Heart right ventricle (tissue), 16 donors: ENCODE measurements at regions of chr13 and their contacts with region 1.

Region 1: GRCh38 chr13:107124129-107124718 is 556.3 kb upstream of the ARGLU1 start:
- DNase-seq: no peak
- ATAC-seq: no peak
- H3K4me3 ChIP-seq: no peak overlapping the region
- H3K27ac ChIP-seq: no peak overlapping the region
- H3K4me1 ChIP-seq: peaks cover 0 to 6% (median 0%) of the 10 kb centered on the region in 9 donors
- H3K27me3 ChIP-seq: no peaks in the 10 kb centered on the region
- CTCF ChIP-seq: peak; percentile 54 to 88 (median 66)

Region 2: DNA sequence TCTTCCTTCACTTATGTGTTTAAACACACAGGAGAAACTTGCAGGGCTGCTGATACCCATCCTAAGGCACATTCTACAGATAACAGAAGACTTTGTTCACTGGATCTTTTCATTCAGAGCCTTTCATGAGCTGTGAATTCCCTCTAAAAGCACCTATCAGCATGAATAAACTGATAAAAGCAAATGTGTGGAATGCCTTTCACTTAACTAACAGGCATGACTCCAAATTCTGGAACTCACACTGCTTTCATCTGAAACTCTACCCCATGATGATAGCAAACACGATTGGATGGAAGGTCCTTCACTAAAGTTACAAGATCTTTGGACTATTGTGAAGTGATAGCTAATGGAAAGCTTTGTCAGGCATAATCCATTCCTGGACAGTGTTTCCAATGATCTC is 1046.0 kb before region 1 on chr13:
- intact Hi-C with region 1: loop called in 4 of 10 experiments (anchors 10 kb)
- DNase-seq: no peak
- ATAC-seq: no peak
- H3K4me3 ChIP-seq: no peak overlapping the region
- H3K27ac ChIP-seq: no peak overlapping the region
- H3K4me1 ChIP-seq: no peaks in the 10 kb centered on the region
- H3K27me3 ChIP-seq: peaks cover 0 to 2% (median 0%) of the 10 kb centered on the region in 7 donors
- CTCF ChIP-seq: no peak

Region 3: DNA sequence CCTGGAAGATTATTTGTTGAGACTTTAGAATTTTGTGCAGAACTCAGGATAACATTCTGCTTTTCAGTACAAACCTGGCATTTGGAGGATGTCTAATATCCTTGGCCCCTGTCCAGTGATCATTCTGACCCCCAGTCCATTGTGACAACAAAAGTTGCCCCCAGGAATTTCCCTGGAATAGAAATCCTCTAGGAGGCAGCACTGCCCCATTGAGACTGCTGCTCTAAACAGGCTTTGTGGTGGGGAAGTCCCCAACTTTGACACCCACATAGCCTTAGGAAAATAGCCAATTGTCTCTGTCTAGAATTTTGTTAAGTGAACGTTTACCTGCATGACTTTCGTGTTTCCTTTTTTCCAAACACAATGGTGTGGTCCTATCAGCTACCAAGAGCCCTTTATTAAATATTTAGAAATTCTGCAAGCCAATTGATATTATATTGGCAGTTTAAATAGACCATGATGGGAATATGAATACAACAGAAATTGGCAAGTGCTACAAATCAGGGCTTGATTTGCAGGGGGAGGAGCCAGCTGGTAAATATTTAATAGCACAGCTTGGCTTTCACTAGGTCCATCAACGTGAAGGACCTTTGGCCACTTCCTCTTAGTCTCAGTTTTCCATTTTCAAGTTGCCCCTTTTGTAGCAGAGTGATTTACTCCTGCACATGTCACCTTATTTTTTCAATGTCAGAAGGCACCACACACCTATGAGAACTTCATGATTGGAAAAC is 1040.4 kb before region 1 on chr13:
- intact Hi-C with region 1: loop called in 4 of 10 experiments (anchors 10 kb)
- DNase-seq: peak in 1 of 2 donors; percentile 32
- ATAC-seq: peak in 4 of 8 donors; percentile 47 to 67 (median 60)
- H3K4me3 ChIP-seq: no peak overlapping the region
- H3K27ac ChIP-seq: no peak overlapping the region
- H3K4me1 ChIP-seq: no peaks in the 10 kb centered on the region
- H3K27me3 ChIP-seq: no peaks in the 10 kb centered on the region
- CTCF ChIP-seq: peak; percentile 23 to 76 (median 61)

Region 4: DNA sequence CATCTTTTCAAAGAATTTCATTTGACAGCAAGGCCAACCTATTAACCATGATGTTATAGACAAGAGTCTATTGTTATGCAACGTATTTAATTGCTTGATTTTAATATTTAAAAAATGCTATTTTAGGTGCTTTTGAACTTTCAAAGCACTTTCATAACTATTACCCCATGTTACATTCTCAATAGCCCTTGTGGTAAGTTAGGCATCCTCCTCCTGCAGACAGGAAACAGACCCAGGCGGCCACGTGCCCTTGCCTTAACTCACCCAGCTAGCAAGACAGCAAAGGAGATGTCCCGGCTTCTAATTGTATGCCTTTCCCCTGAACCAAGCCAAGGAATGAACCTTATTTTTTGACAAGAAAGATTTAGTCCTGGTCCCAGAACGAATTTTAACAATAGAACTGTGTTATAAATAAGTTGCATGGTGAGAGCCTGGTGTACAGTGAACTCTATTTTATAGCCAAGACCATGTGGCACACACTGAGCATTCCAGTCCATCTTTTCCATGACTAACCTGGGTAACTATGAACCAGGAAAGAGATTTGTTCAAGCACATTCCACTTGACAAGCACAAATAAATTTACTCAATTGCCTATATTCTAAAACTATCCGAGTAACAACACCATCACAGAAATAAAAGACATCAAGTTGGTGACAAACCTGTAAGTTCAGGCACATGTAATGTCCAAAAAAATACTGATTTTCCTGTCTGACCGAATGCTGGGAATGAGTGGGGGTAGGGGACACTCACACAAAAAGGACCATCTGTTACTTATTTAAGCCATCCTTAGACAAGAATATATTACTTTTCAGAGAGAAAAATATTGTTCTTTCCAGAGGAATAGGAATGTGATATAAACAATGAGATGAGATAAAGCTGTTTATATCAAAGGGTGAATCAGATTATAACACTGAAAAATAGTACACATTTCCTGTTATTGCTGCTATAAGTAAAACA is 751.7 kb before region 1 on chr13:
- intact Hi-C with region 1: no loop called
- DNase-seq: no peak
- ATAC-seq: no peak
- H3K4me3 ChIP-seq: no peak overlapping the region
- H3K27ac ChIP-seq: no peak overlapping the region
- H3K4me1 ChIP-seq: peaks cover 0 to 18% (median 0%) of the 10 kb centered on the region in 9 donors
- H3K27me3 ChIP-seq: no peaks in the 10 kb centered on the region
- CTCF ChIP-seq: no peak

Region 5: GRCh38 chr13:106927421-106927820 is 196.8 kb before region 1 on chr13:
- intact Hi-C with region 1: loop called in 5 of 10 experiments (anchors 5 to 10 kb)
- DNase-seq: no peak
- ATAC-seq: no peak
- H3K4me3 ChIP-seq: no peak overlapping the region
- H3K27ac ChIP-seq: no peak overlapping the region
- H3K4me1 ChIP-seq: no peaks in the 10 kb centered on the region
- H3K27me3 ChIP-seq: peaks cover 0 to 5% (median 0%) of the 10 kb centered on the region in 7 donors
- CTCF ChIP-seq: no peak

Region 6: DNA sequence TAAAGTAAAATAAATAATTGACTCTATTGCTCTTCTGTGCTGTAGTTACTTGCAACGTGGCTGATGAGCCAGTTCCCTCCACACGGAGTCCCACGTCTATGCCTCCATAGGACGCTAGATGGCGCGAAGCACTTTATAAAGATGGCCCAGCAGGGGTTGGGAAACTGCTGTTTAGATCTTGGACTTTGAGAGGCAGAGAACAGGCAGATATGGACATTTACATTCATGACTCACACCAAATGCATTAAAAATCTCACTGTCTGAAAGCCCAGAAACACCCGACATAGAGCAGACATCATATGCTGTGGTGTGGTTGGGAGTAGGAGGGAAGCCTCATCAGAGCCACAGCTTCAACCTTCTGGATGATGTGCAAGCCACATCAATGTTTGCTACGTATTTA is 86.8 kb after region 1 on chr13:
- intact Hi-C with region 1: no loop called
- DNase-seq: peak; percentile 56 to 65
- ATAC-seq: peak; percentile 72 to 91 (median 88)
- H3K4me3 ChIP-seq: peak overlapping the region in 5 of 10 donors; percentile 28 to 42 (median 31)
- H3K27ac ChIP-seq: no peak overlapping the region
- H3K4me1 ChIP-seq: peaks cover 0 to 43% (median 13%) of the 10 kb centered on the region in 9 donors
- H3K27me3 ChIP-seq: no peaks in the 10 kb centered on the region
- CTCF ChIP-seq: peak; percentile 76 to 93 (median 90)

Region 7: GRCh38 chr13:107379407-107380155 is 255.4 kb after region 1 on chr13:
- intact Hi-C with region 1: no loop called
- DNase-seq: no peak
- ATAC-seq: no peak
- H3K4me3 ChIP-seq: no peak overlapping the region
- H3K27ac ChIP-seq: no peak overlapping the region
- H3K4me1 ChIP-seq: peaks cover 0 to 12% (median 0%) of the 10 kb centered on the region in 9 donors
- H3K27me3 ChIP-seq: peaks cover 0 to 3% (median 0%) of the 10 kb centered on the region in 7 donors
- CTCF ChIP-seq: no peak